Panc1 (cell line): ENCODE measurements at regions of chr3 and their contacts with region 1.

Region 1: GRCh38 chr3:138923531-138923994 is 23.4 kb downstream of the FOXL2 start:
- DNase-seq: peak; percentile 81
- ATAC-seq: peak; percentile 82
- H3K4me3 ChIP-seq: peak overlapping the region in 1 of 2 experiments; percentile 19; a peak in 1 of 4 replicates
- H3K27ac ChIP-seq: no peak overlapping the region; the same call in 1 of the 2 replicates
- H3K4me1 ChIP-seq: peaks cover 27% of the 10 kb centered on the region
- H3K27me3 ChIP-seq: no peaks in the 10 kb centered on the region
- CTCF ChIP-seq: peak; percentile 96

Region 2: DNA sequence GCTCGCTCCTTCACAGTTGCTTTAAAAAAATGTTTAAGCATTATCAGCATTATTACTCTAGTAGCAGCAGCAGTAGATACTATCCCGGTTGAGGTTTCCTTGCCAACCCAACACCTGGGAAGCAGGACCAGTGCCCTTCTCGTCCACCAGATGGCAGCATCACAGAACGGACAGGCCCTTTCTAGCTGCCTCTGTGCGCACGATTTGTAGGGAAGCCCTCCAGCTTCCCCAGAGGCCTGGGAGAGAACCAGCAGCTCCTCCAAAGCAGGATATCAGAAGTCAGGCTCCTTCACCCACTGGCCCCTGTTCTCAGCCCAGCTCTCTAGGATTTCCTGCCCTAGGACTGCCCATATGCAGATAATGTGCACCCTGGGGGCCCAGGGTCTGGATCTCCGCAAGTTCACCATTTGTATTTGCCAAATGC is 506.0 kb before region 1 on chr3:
- CTCF ChIA-PET with region 1: interaction called, 8 read pairs
- POLR2A ChIA-PET with region 1: no interaction called
- in situ Hi-C with region 1: no loop called
- intact Hi-C with region 1: loop called (anchors 2 kb)
- DNase-seq: peak; percentile 67
- ATAC-seq: peak; percentile 98
- H3K4me3 ChIP-seq: no peak overlapping the region
- H3K27ac ChIP-seq: no peak overlapping the region
- H3K4me1 ChIP-seq: no peaks in the 10 kb centered on the region
- H3K27me3 ChIP-seq: peaks cover 5% of the 10 kb centered on the region; the same call in 1 of the 2 replicates
- CTCF ChIP-seq: peak; percentile 97

Region 3: GRCh38 chr3:138594150-138594934 is 329.2 kb before region 1 on chr3 and contains the start of gene CEP70:
- CTCF ChIA-PET with region 1: interaction called, 16 read pairs
- POLR2A ChIA-PET with region 1: interaction called, 3 read pairs
- in situ Hi-C with region 1: no loop called
- intact Hi-C with region 1: loop called (anchors 2 kb)
- DNase-seq: peak; percentile 87
- ATAC-seq: peak; percentile 98
- H3K4me3 ChIP-seq: peak within 1 kb of the TSS; percentile 88 to 93
- H3K27ac ChIP-seq: peak within 1 kb of the TSS; percentile 96
- H3K4me1 ChIP-seq: peaks cover 23% of the 10 kb centered on the region
- H3K27me3 ChIP-seq: no peaks in the 10 kb centered on the region
- CTCF ChIP-seq: peak; percentile 91
- total RNA-seq, gene CEP70: 64.5 TPM

Region 4: DNA sequence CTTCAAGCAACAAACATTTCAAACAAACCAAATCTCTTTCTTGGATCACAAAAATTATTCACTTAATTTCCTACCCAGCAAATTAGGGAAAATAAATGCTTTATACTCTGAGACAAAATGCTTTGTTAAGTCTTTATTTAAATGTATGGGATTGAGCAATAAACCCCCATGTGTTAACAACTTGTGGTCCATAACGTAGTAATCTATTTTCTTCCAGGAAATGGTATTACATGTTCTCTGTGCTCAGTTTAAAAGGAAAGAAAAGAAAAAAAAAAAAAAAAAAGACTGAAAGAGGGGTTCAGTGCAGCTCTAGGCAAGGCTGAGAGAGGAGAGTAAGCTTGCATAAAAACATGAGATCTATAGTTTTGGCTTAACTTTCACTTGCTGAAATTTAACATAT is 191.1 kb before region 1 on chr3:
- CTCF ChIA-PET with region 1: no interaction called
- POLR2A ChIA-PET with region 1: interaction called, 12 read pairs
- in situ Hi-C with region 1: no loop called
- intact Hi-C with region 1: no loop called
- DNase-seq: no peak
- ATAC-seq: no peak
- H3K4me3 ChIP-seq: no peak overlapping the region
- H3K27ac ChIP-seq: no peak overlapping the region
- H3K4me1 ChIP-seq: no peaks in the 10 kb centered on the region
- H3K27me3 ChIP-seq: no peaks in the 10 kb centered on the region
- CTCF ChIP-seq: no peak

Region 5: GRCh38 chr3:138935848-138936740 is 12.5 kb after region 1 on chr3:
- CTCF ChIA-PET with region 1: interaction called, 33 read pairs
- POLR2A ChIA-PET with region 1: interaction called, 3 read pairs
- in situ Hi-C with region 1: no loop called
- intact Hi-C with region 1: no loop called
- DNase-seq: no peak
- ATAC-seq: peak; percentile 88
- H3K4me3 ChIP-seq: peak overlapping the region; percentile 45 to 57
- H3K27ac ChIP-seq: peak overlapping the region; percentile 75
- H3K4me1 ChIP-seq: peaks cover 14% of the 10 kb centered on the region
- H3K27me3 ChIP-seq: no peaks in the 10 kb centered on the region
- CTCF ChIP-seq: peak; percentile 98